Sciatic nerve (tissue), 2 donors: ENCODE measurements at regions of chr4 and their contacts with region 1.

Region 1: DNA sequence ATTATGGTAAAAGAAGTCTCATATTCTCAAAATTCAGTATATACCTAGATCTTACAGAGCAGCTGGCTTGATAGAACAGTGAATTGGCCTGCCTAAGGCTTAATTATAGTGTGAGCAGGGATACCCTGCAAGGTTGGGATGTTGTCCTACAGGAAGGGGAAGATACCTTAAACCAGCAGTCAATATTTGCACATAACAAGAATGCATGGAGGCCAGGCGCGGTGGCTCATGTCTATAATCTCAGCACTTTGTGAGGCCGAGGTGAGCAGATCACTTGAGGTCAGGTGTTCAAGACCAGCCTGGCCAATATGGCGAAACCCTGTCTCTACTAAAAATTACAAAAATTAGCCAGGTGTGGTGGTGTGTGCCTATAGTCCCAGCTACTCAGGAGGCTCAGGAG is 58.7 kb upstream of the ABCG2 start:
- DNase-seq: no peak
- ATAC-seq: no peak

Region 2: GRCh38 chr4:88035292-88035691 is 181.9 kb before region 1 on chr4:
- intact Hi-C with region 1: loop called (anchors 1 kb)
- DNase-seq: no peak
- ATAC-seq: no peak